Ovary (tissue), 10 donors: ENCODE measurements at regions of chr20 and their contacts with region 1.

Region 1: DNA sequence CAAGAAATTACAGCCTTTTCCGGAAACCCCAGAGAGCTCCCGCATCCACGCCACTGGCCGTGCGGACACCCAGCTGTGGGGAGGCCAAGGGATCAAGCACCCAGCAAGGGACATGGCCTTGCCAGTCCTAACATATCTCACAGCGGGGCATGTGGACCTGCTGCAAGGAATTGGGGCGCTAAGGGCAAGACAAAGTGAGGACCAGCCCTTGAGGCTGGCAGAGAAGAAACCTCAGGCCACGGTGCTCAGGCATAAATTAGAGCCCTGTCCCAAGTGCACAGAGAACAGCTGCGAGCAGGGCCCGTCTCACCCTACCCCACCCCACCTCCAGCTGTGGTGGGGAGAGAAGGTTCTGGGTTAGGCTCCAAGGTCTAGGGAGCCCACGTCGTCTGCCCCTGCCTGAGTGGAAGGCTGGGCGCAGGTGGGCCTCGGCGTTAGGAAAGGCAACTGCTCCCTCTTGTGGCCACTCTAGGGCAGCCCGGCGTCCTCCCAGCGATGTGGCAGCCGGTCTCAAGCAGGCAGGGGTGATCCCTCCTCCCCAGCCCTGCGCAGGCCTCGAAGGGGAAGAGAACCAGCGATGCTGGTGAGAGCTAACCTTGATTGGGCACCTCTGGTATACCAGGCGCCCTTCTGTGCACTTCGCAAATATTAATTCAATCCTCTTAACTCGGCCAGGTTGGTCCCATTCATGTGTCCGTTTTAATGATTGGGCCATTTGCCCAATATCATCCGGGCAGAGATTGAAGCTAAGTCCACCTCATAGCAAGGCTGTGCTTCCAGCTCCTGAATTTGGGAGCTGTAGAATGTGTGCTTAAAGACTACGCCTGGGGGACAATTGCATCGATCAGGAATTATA is 235.8 kb downstream of the NFATC2 start:
- DNase-seq: peak; percentile 71 to 86 (median 79)
- H3K4me3 ChIP-seq: no peak overlapping the region
- H3K27ac ChIP-seq: no peak overlapping the region
- H3K4me1 ChIP-seq: no peaks in the 10 kb centered on the region
- H3K27me3 ChIP-seq: no peaks in the 10 kb centered on the region
- CTCF ChIP-seq: peak; percentile 57 to 85 (median 65)
- EP300 ChIP-seq: no peak
- POLR2A ChIP-seq: no peak

Region 2: GRCh38 chr20:50987592-50988210 is 319.0 kb before region 1 on chr20:
- intact Hi-C with region 1: loop called (anchors 2 to 5 kb)
- DNase-seq: peak; percentile 54 to 72 (median 67)
- H3K4me3 ChIP-seq: no peak overlapping the region
- H3K27ac ChIP-seq: no peak overlapping the region
- H3K4me1 ChIP-seq: no peaks in the 10 kb centered on the region
- H3K27me3 ChIP-seq: no peaks in the 10 kb centered on the region
- CTCF ChIP-seq: peak; percentile 76 to 94 (median 76)
- EP300 ChIP-seq: no peak
- POLR2A ChIP-seq: no peak